ENCODE measurements at regions of chr1 and their contacts with region 1.

Region 1: GRCh38 chr1:6930732-6931300 is 145.6 kb downstream of the CAMTA1 start:
- DNase-seq: no peak
- H3K4me3 ChIP-seq: no peak overlapping the region
- H3K4me3 Mint-ChIP-seq: no peak overlapping the region
- H3K27ac ChIP-seq: no peak overlapping the region
- H3K27ac Mint-ChIP-seq: no peak overlapping the region
- H3K4me1 ChIP-seq: no peaks in the 10 kb centered on the region
- H3K4me1 Mint-ChIP-seq: no peaks in the 10 kb centered on the region
- H3K27me3 ChIP-seq: peaks cover 20 to 21% of the 10 kb centered on the region in 2 donors
- H3K27me3 Mint-ChIP-seq: peaks cover 4 to 15% (median 6%) of the 10 kb centered on the region in 3 donors
- CTCF ChIP-seq: no peak

Region 2: GRCh38 chr1:6547301-6547700 is 383.5 kb before region 1 on chr1:
- intact Hi-C with region 1: loop called in 1 of 2 experiments (anchors 5 kb)
- DNase-seq: no peak
- H3K4me3 ChIP-seq: no peak overlapping the region
- H3K4me3 Mint-ChIP-seq: no peak overlapping the region
- H3K27ac ChIP-seq: no peak overlapping the region
- H3K27ac Mint-ChIP-seq: peak overlapping the region in 4 of 7 donors; percentile 27 to 60 (median 40)
- H3K4me1 ChIP-seq: peaks cover 6 to 7% of the 10 kb centered on the region in 2 donors
- H3K4me1 Mint-ChIP-seq: peaks cover 18% of the 10 kb centered on the region
- H3K27me3 ChIP-seq: no peaks in the 10 kb centered on the region
- H3K27me3 Mint-ChIP-seq: no peaks in the 10 kb centered on the region
- CTCF ChIP-seq: no peak

Region 3: DNA sequence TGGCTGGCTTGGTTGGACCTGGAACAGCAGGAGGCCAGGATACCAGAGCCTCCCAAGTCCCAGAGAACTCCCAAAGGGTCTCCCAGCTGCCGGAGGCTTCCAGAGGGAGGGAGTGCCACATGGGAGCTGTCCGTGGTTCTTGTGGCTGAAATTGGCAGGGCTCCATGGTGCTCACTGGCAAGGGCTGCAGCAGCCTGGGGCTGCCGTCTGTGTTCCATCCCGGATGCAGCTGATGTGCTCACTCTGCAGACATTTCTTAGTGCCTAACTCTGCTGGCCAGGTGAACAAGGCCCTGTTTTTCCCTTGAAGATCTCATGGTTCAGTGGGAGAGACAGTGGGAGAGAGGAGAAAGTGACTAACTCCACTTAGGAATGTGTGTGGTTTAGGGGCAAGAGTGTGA is 115.5 kb after region 1 on chr1:
- intact Hi-C with region 1: no loop called
- DNase-seq: no peak
- H3K4me3 ChIP-seq: no peak overlapping the region
- H3K4me3 Mint-ChIP-seq: no peak overlapping the region
- H3K27ac ChIP-seq: no peak overlapping the region
- H3K27ac Mint-ChIP-seq: no peak overlapping the region
- H3K4me1 ChIP-seq: no peaks in the 10 kb centered on the region
- H3K4me1 Mint-ChIP-seq: no peaks in the 10 kb centered on the region
- H3K27me3 ChIP-seq: no peaks in the 10 kb centered on the region
- H3K27me3 Mint-ChIP-seq: peaks cover 3 to 9% (median 5%) of the 10 kb centered on the region in 3 donors
- CTCF ChIP-seq: no peak